Caco-2 (cell line): ENCODE measurements at regions of chr17 and their contacts with region 1.

Region 1: DNA sequence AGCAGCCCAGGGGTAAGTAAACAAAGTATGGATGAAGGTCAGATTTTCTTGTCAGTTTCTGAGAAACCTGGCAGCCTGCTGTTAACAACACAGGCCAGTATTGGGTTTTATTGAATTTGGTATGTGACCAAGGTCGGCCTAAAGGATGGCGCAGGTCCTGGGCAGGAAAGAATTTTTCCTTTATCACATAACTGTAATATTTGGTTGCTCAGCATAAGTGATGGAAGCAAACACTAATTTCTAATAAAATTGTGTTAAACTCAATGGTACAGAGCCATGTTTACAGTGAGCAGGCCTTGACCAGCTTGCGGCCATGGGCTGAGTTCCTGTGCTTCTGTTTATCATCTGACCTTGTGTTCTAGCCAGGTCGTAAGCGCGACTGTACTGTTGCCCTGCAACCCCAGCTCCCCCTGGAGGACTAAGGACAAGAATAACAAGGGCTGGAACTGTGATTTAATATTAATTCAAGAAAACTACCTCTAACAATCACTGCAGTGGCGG is 10.5 kb downstream of the POLDIP2 start:
- DNase-seq: peak; percentile 70 to 72
- H3K4me3 ChIP-seq: no peak overlapping the region
- H3K4me3 Mint-ChIP-seq: no peak overlapping the region
- H3K27ac Mint-ChIP-seq: peak overlapping the region; percentile 1
- H3K4me1 ChIP-seq: peaks cover 22% of the 10 kb centered on the region
- H3K4me1 Mint-ChIP-seq: peaks cover 8% of the 10 kb centered on the region
- H3K27me3 ChIP-seq: no peaks in the 10 kb centered on the region
- H3K27me3 Mint-ChIP-seq: no peaks in the 10 kb centered on the region
- CTCF ChIP-seq: peak; percentile 48 to 66

Region 2: DNA sequence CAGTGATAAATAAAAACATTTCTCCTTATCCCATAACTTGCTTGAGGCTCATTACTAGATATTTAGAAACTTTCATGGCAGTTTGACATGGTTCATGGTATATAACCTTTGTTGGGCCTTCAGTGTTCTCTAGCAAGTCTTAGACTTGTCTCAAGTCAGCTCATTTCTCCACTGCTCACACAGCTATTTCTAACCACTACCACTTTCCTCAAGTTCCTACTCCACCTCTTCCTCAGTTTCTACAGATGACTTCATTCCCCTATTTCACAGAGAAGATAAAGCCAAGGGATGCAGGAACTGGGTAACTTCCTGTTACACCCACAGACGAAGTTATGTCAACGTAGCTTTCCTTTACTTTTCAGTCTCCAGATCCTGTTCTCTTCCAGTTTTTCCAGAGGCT is 281.1 kb before region 1 on chr17:
- CTCF ChIA-PET with region 1: no interaction called
- POLR2A ChIA-PET with region 1: interaction called, 10 read pairs
- intact Hi-C with region 1: no loop called
- DNase-seq: no peak
- H3K4me3 ChIP-seq: no peak overlapping the region
- H3K4me3 Mint-ChIP-seq: no peak overlapping the region
- H3K27ac Mint-ChIP-seq: no peak overlapping the region
- H3K4me1 ChIP-seq: peaks cover 22% of the 10 kb centered on the region
- H3K4me1 Mint-ChIP-seq: peaks cover 24% of the 10 kb centered on the region
- H3K27me3 ChIP-seq: no peaks in the 10 kb centered on the region
- H3K27me3 Mint-ChIP-seq: no peaks in the 10 kb centered on the region
- CTCF ChIP-seq: no peak

Region 3: DNA sequence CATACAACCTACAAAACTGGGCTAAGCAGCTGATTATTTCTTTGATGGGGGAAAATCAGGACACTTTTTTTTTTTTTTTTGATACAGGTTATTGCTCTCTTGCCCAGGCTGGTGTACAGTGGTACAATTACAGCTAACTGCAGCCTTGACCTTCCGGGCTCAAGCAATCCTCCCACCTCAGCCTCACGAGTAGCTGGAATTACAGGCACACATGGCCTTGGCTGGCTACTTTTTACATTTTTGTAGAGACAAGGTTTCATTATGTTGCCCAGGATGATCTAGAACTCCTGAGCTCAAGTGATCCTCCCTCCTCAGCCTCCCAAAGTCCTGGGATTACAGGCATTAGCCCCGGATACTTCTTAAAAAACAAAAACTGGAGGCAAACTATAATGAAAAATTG is 48.3 kb before region 1 on chr17:
- CTCF ChIA-PET with region 1: no interaction called
- POLR2A ChIA-PET with region 1: no interaction called
- intact Hi-C with region 1: no loop called
- DNase-seq: no peak
- H3K4me3 ChIP-seq: no peak overlapping the region
- H3K4me3 Mint-ChIP-seq: no peak overlapping the region
- H3K27ac Mint-ChIP-seq: no peak overlapping the region
- H3K4me1 ChIP-seq: no peaks in the 10 kb centered on the region
- H3K4me1 Mint-ChIP-seq: no peaks in the 10 kb centered on the region
- H3K27me3 ChIP-seq: no peaks in the 10 kb centered on the region
- H3K27me3 Mint-ChIP-seq: peaks cover 6% of the 10 kb centered on the region
- CTCF ChIP-seq: no peak

Region 4: GRCh38 chr17:28426081-28426519 is 79.3 kb after region 1 on chr17:
- CTCF ChIA-PET with region 1: no interaction called
- POLR2A ChIA-PET with region 1: no interaction called
- intact Hi-C with region 1: no loop called
- DNase-seq: peak; percentile 69 to 74
- H3K4me3 ChIP-seq: no peak overlapping the region
- H3K4me3 Mint-ChIP-seq: no peak overlapping the region
- H3K27ac Mint-ChIP-seq: no peak overlapping the region
- H3K4me1 ChIP-seq: no peaks in the 10 kb centered on the region
- H3K4me1 Mint-ChIP-seq: no peaks in the 10 kb centered on the region
- H3K27me3 ChIP-seq: no peaks in the 10 kb centered on the region
- H3K27me3 Mint-ChIP-seq: no peaks in the 10 kb centered on the region
- CTCF ChIP-seq: peak; percentile 67 to 74